CD4-positive, alpha-beta T cell (primary cell): ENCODE measurements at regions of chr20 and their contacts with region 1.

Region 1: DNA sequence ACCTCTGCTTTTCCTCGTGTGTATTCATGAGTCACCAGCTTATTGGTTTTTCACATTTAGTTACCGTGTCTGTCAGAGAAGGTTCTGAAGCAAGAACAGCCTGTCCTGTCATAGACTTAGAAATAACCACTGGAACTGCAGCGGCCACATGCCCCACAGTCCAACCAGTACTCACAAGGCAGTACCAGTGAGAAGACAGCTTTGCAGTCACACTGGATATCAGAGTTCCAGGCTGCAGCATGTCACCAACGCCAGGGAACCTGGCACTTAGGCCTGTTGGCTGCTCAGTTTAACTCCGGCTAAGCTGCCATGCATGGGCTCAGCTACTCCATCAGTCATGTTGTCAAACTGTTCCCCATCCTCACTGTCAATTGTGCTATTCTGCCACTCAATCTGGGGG is 40.1 kb downstream of the ADNP start:
- DNase-seq: no peak
- ATAC-seq: no peak
- H3K4me3 ChIP-seq: no peak overlapping the region
- H3K4me3 Mint-ChIP-seq: no peak overlapping the region
- H3K27ac ChIP-seq: no peak overlapping the region
- H3K27ac Mint-ChIP-seq: peak overlapping the region; percentile 26
- H3K4me1 ChIP-seq: no peaks in the 10 kb centered on the region
- H3K4me1 Mint-ChIP-seq: no peaks in the 10 kb centered on the region
- H3K27me3 ChIP-seq: no peaks in the 10 kb centered on the region
- H3K27me3 Mint-ChIP-seq: no peaks in the 10 kb centered on the region
- CTCF ChIP-seq: no peak

Region 2: GRCh38 chr20:50837532-50838506 is 53.3 kb before region 1 on chr20:
- CTCF ChIA-PET with region 1: no interaction called
- POLR2A ChIA-PET with region 1: no interaction called
- intact Hi-C with region 1: loop called in 1 of 2 experiments (anchors 10 kb)
- DNase-seq: no peak
- ATAC-seq: no peak
- H3K4me3 ChIP-seq: no peak overlapping the region
- H3K4me3 Mint-ChIP-seq: no peak overlapping the region
- H3K27ac ChIP-seq: no peak overlapping the region
- H3K27ac Mint-ChIP-seq: no peak overlapping the region
- H3K4me1 ChIP-seq: no peaks in the 10 kb centered on the region
- H3K4me1 Mint-ChIP-seq: no peaks in the 10 kb centered on the region
- H3K27me3 ChIP-seq: no peaks in the 10 kb centered on the region
- H3K27me3 Mint-ChIP-seq: no peaks in the 10 kb centered on the region
- CTCF ChIP-seq: no peak

Region 3: DNA sequence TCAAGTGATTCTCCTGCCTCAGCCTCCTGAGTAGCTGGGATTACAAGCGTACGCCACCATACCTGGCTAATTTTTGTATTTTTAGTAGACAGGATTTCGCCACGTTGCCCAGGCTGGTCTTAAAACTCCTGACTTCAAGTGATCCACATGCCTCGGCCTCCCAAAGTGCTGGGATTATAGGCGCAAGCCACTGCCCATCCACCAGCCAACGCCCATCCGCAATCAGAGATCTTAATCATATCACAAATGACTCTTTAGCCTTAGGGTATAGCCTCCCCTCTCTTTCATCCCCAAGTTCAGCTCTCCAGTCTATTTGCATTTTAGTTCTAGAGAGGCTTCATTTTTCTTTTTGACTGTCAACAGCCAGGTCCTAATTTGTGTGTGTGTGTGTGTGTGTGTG is 48.6 kb after region 1 on chr20:
- CTCF ChIA-PET with region 1: no interaction called
- POLR2A ChIA-PET with region 1: no interaction called
- intact Hi-C with region 1: no loop called
- DNase-seq: no peak
- ATAC-seq: no peak
- H3K4me3 ChIP-seq: no peak overlapping the region
- H3K4me3 Mint-ChIP-seq: no peak overlapping the region
- H3K27ac ChIP-seq: no peak overlapping the region
- H3K27ac Mint-ChIP-seq: no peak overlapping the region
- H3K4me1 ChIP-seq: no peaks in the 10 kb centered on the region
- H3K4me1 Mint-ChIP-seq: no peaks in the 10 kb centered on the region
- H3K27me3 ChIP-seq: no peaks in the 10 kb centered on the region
- H3K27me3 Mint-ChIP-seq: no peaks in the 10 kb centered on the region
- CTCF ChIP-seq: no peak